ENCODE measurements at regions of chr1 and their contacts with region 1.

Region 1: DNA sequence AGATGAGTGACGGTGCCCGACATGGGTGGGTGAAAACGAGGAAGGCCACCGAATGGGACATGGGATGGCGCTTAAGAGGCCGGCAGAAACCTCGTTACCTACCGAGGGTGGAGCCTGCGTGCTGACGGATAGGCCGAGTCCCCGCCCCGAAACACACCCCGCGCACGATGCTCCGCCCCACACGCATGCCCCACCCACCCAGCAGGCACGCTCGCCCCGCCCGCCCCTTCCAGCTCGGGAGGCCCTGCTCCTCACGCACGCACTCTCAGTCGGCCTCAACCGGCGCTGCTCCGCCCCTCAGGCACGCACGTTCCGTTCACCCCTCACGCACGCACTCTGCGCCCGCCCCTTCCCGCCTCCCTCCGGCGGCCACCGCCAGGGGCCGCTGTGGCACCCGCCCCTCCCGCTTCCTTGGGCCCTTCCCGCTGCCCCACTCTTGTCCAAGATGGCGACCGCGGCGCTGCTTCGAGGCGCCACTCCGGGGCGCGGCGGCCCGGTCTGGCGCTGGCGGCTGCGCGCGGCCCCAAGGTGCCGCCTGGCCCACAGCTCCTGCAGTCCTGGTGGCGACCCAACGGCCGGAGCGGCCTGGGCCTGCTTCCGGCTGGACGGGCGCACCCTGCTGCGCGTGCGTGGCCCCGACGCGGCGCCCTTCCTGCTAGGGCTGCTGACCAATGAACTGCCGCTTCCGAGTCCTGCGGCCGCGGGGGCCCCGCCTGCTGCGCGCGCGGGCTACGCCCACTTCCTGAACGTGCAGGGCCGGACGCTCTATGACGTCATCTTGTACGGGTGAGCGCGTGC is at the start of gene IBA57:
- DNase-seq: peak; percentile 97
- ATAC-seq: peak; percentile 88
- H3K4me3 ChIP-seq: peak within 1 kb of the TSS; percentile 76 to 78
- H3K27ac ChIP-seq: peak within 1 kb of the TSS; percentile 100
- H3K4me1 ChIP-seq: peaks cover 10 to 39% of the 10 kb centered on the region in 2 experiments
- H3K27me3 ChIP-seq: no peaks in the 10 kb centered on the region
- CTCF ChIP-seq: peak; percentile 40 to 85 (median 75); a peak in 4 of 6 replicates
- POLR2A ChIP-seq: peak; percentile 64
- RAD21 ChIP-seq: no peak
- total RNA-seq, gene IBA57: 11.6 TPM

Region 2: DNA sequence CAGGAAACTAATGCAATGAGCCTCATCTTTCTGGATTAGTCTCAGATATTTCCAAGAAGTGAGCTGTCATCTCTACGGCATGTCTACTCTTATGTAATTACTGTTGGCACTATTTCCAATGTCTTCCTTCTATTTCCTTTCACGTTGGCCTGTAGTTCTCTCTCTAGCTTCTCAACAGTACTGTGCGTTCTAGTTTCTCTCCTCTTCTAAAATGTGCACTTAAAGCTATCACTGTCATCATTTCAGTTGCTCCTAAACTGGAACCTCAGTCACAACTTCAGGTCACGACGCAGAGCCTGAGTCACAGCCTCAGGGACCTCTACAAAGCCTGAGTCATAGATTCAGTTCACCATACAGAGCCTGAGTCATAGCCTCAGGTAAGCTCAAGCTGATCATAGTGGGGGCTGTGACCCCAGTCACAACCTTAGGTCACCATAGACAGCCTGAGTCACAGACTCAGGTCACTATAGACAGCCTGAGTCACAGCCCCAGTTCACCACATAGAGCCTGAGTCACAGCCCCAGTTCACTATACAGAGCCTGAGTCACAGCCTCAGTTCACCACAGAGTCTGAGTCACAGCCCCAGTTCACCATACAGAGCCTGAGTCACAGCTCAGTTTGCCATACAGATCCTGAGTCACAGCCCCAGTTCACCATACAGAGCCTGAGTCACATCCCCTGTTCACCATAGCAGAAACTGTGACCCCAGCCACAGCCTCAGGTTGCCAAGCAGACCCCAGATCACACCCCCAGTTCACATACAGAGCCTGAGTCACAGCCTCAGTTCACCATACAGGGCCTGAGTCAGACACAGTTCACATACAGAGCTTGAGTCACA is 230.9 kb before region 1 on chr1:
- CTCF ChIA-PET with region 1: no interaction called
- POLR2A ChIA-PET with region 1: no interaction called
- RAD21 ChIA-PET with region 1: no interaction called
- intact Hi-C with region 1: no loop called
- DNase-seq: peak; percentile 99
- ATAC-seq: peak; percentile 94
- H3K4me3 ChIP-seq: peak overlapping the region in 1 of 2 experiments; percentile 23; a peak in 1 of 4 replicates
- H3K27ac ChIP-seq: peak overlapping the region; percentile 84
- H3K4me1 ChIP-seq: peaks cover 16 to 59% of the 10 kb centered on the region in 2 experiments
- H3K27me3 ChIP-seq: no peaks in the 10 kb centered on the region
- CTCF ChIP-seq: no peak
- POLR2A ChIP-seq: no peak
- RAD21 ChIP-seq: no peak

Region 3: GRCh38 chr1:228131766-228132165 is 33.8 kb before region 1 on chr1:
- CTCF ChIA-PET with region 1: interaction called, 15 read pairs
- POLR2A ChIA-PET with region 1: interaction called, 4 read pairs
- RAD21 ChIA-PET with region 1: interaction called in 1 of 2 experiments, 4 read pairs
- intact Hi-C with region 1: no loop called
- DNase-seq: no peak
- ATAC-seq: no peak
- H3K4me3 ChIP-seq: no peak overlapping the region
- H3K27ac ChIP-seq: 0 out of 2 replicates have a peak overlapping the region, but pooled peaks have one; percentile 6
- H3K4me1 ChIP-seq: peaks cover 7 to 18% of the 10 kb centered on the region in 2 experiments
- H3K27me3 ChIP-seq: peaks cover 3% of the 10 kb centered on the region; the same call in 1 of the 2 replicates
- CTCF ChIP-seq: no peak
- POLR2A ChIP-seq: no peak
- RAD21 ChIP-seq: no peak

Region 4: GRCh38 chr1:228139944-228140656 is 25.5 kb before region 1 on chr1 and contains the start of gene GUK1:
- CTCF ChIA-PET with region 1: interaction called, 3 read pairs
- POLR2A ChIA-PET with region 1: interaction called, 8 read pairs
- RAD21 ChIA-PET with region 1: no interaction called
- intact Hi-C with region 1: loop called (anchors 1 kb)
- DNase-seq: peak; percentile 100
- ATAC-seq: peak; percentile 96
- H3K4me3 ChIP-seq: peak within 1 kb of the TSS; percentile 98
- H3K27ac ChIP-seq: peak within 1 kb of the TSS; percentile 79
- H3K4me1 ChIP-seq: peaks cover 0 to 17% of the 10 kb centered on the region in 2 experiments; a peak in 3 of 4 replicates
- H3K27me3 ChIP-seq: peaks cover 3% of the 10 kb centered on the region; the same call in 1 of the 2 replicates
- CTCF ChIP-seq: no peak
- POLR2A ChIP-seq: peak; percentile 54
- RAD21 ChIP-seq: no peak
- total RNA-seq, gene GUK1: 145 TPM

Measured in HCT116 (cell line).